ENCODE measurements at regions of chr2 and their contacts with region 1.

Region 1: GRCh38 chr2:17719562-17720371 is 33.8 kb downstream of the SMC6 start:
- DNase-seq: peak in 2 of 5 donors; percentile 3 to 7
- H3K4me3 ChIP-seq: no peak overlapping the region
- H3K27ac ChIP-seq: no peak overlapping the region
- H3K4me1 ChIP-seq: no peaks in the 10 kb centered on the region
- H3K27me3 ChIP-seq: no peaks in the 10 kb centered on the region
- CTCF ChIP-seq: peak; percentile 61

Region 2: DNA sequence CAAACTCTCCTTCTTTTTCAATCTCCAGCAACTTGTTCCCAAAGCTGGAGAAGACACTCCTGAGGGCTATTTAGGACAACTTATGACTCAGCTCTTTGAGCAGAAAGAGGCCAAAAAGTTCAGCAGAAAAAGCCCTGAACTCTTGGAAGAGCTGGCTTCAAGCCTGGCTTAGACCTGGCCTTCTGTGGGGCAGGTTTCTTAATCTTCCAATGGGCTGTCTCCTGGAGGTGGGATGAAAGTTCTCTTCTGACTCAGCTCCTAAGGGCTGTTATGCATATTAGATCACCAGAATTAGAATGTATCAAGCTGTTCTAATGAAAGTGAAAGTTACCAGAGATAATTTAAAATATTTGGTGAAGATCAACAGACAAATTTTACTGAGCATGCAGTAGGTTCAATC is 331.0 kb before region 1 on chr2:
- intact Hi-C with region 1: no loop called
- DNase-seq: no peak
- H3K4me3 ChIP-seq: no peak overlapping the region
- H3K27ac ChIP-seq: no peak overlapping the region
- H3K4me1 ChIP-seq: no peaks in the 10 kb centered on the region
- H3K27me3 ChIP-seq: no peaks in the 10 kb centered on the region
- CTCF ChIP-seq: no peak

Region 3: GRCh38 chr2:17646081-17646554 is 73.6 kb before region 1 on chr2:
- intact Hi-C with region 1: no loop called
- DNase-seq: peak in 3 of 5 donors; percentile 59 to 95 (median 87)
- H3K4me3 ChIP-seq: no peak overlapping the region
- H3K27ac ChIP-seq: no peak overlapping the region
- H3K4me1 ChIP-seq: no peaks in the 10 kb centered on the region
- H3K27me3 ChIP-seq: no peaks in the 10 kb centered on the region
- CTCF ChIP-seq: peak; percentile 87

Region 4: GRCh38 chr2:17821535-17822444 is 102.0 kb after region 1 on chr2:
- intact Hi-C with region 1: loop called (anchors 10 kb)
- DNase-seq: peak in 4 of 5 donors; percentile 53 to 83 (median 66)
- H3K4me3 ChIP-seq: no peak overlapping the region
- H3K27ac ChIP-seq: no peak overlapping the region
- H3K4me1 ChIP-seq: peaks cover 0 to 5% (median 4%) of the 10 kb centered on the region in 3 donors
- H3K27me3 ChIP-seq: no peaks in the 10 kb centered on the region
- CTCF ChIP-seq: no peak

Region 5: GRCh38 chr2:19028587-19029375 is 1309.0 kb after region 1 on chr2:
- intact Hi-C with region 1: no loop called
- DNase-seq: no peak
- H3K4me3 ChIP-seq: no peak overlapping the region
- H3K27ac ChIP-seq: no peak overlapping the region
- H3K4me1 ChIP-seq: no peaks in the 10 kb centered on the region
- H3K27me3 ChIP-seq: no peaks in the 10 kb centered on the region
- CTCF ChIP-seq: no peak